Naive thymus-derived CD4-positive, alpha-beta T cell (primary cell): ENCODE measurements at regions of chr7 and their contacts with region 1.

Region 1: GRCh38 chr7:21412410-21412851 is 15.5 kb upstream of the SP4 start:
- DNase-seq: peak in 3 of 9 donors; percentile 7 to 23 (median 16)
- ATAC-seq: peak; percentile 72
- H3K4me3 ChIP-seq: peak overlapping the region; percentile 6
- H3K4me3 Mint-ChIP-seq: peak overlapping the region in 3 of 10 donors; percentile 14 to 70 (median 18)
- H3K27ac ChIP-seq: no peak overlapping the region
- H3K27ac Mint-ChIP-seq: peak overlapping the region in 6 of 9 donors; percentile 1 to 90 (median 28)
- H3K4me1 ChIP-seq: peaks cover 0 to 29% of the 10 kb centered on the region in 2 donors
- H3K4me1 Mint-ChIP-seq: peaks cover 7 to 57% (median 17%) of the 10 kb centered on the region in 7 donors
- H3K27me3 ChIP-seq: no peaks in the 10 kb centered on the region
- H3K27me3 Mint-ChIP-seq: peaks cover 0 to 4% (median 0%) of the 10 kb centered on the region in 5 donors

Region 2: DNA sequence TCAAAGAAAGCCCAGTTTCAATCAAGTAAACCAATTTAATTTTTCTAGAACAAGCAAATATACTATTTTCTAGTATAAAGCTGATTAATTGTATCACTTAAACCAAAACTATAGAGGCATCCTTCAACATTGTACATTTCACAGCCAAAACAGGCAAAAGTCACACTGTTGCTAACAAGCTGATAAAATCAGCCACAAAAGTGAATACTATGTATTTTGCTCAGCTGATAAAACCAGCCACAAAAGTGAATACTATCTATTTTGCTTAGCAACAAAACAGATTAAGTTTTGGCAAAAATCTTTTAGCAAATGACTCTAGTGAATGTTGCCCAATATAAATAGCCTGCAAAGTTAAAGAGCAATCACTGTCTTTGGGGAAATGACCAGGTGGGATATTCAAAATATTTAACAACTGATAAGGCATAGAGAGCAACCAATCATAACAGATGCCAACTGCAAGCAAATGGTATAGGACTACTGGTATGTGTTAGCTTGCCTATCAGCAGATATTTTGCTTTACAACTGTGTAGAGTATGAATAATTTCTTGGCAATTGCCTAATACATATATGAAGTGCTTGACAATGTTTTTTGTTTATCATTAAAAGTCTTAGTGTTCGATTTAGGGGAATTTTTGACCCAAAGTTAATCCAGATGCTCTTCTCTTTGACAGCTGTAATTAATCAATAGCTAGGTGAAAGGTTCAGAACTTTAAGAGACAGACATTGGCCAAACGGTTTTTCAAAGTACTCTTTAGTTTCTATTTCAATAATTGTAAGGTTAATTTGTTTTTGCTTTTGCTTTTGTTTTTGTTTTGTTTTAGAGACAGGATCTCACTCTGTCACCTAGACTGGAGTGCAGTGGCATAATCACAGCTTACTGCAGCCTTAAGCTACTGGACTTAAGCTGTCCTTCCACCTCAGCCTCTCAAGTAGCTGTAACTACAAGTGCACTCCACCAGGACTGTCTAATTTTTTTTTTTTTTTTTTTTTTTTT is 28.9 kb before region 1 on chr7:
- CTCF ChIA-PET with region 1: no interaction called
- POLR2A ChIA-PET with region 1: no interaction called
- intact Hi-C with region 1: loop called in 1 of 2 experiments (anchors 2 kb)
- DNase-seq: no peak
- ATAC-seq: peak; percentile 69
- H3K4me3 ChIP-seq: no peak overlapping the region
- H3K4me3 Mint-ChIP-seq: peak overlapping the region in 2 of 10 donors; percentile 59 to 63
- H3K27ac ChIP-seq: no peak overlapping the region
- H3K27ac Mint-ChIP-seq: peak overlapping the region in 2 of 9 donors; percentile 12 to 87
- H3K4me1 ChIP-seq: peaks cover 0 to 13% of the 10 kb centered on the region in 2 donors
- H3K4me1 Mint-ChIP-seq: peaks cover 0 to 37% (median 6%) of the 10 kb centered on the region in 7 donors
- H3K27me3 ChIP-seq: no peaks in the 10 kb centered on the region
- H3K27me3 Mint-ChIP-seq: no peaks in the 10 kb centered on the region

Region 3: DNA sequence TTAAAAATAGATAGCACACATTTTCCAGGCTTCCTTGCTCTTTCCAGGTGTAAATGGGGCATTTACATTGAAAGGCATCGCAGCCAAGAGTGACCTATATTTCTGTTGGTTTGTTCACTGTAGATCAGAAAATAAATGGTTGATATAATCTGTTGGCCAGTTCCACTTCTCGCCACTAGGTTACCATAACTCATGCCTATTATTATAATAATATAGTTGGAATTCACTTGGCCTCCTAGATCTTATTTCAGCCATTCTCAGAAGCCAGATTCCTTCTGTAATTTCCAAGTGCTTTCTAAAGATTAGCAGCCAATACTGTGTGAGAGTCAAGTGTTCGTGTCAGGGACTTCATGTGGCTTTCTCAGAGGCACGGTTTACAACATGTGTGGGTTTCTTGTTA is 309.9 kb after region 1 on chr7:
- CTCF ChIA-PET with region 1: no interaction called
- POLR2A ChIA-PET with region 1: no interaction called
- intact Hi-C with region 1: no loop called
- DNase-seq: no peak
- ATAC-seq: no peak
- H3K4me3 ChIP-seq: no peak overlapping the region
- H3K4me3 Mint-ChIP-seq: no peak overlapping the region
- H3K27ac ChIP-seq: no peak overlapping the region
- H3K27ac Mint-ChIP-seq: no peak overlapping the region
- H3K4me1 ChIP-seq: no peaks in the 10 kb centered on the region
- H3K4me1 Mint-ChIP-seq: peaks cover 0 to 2% (median 0%) of the 10 kb centered on the region in 7 donors
- H3K27me3 ChIP-seq: no peaks in the 10 kb centered on the region
- H3K27me3 Mint-ChIP-seq: no peaks in the 10 kb centered on the region